ENCODE measurements at regions of chr3 and their contacts with region 1.

Region 1: DNA sequence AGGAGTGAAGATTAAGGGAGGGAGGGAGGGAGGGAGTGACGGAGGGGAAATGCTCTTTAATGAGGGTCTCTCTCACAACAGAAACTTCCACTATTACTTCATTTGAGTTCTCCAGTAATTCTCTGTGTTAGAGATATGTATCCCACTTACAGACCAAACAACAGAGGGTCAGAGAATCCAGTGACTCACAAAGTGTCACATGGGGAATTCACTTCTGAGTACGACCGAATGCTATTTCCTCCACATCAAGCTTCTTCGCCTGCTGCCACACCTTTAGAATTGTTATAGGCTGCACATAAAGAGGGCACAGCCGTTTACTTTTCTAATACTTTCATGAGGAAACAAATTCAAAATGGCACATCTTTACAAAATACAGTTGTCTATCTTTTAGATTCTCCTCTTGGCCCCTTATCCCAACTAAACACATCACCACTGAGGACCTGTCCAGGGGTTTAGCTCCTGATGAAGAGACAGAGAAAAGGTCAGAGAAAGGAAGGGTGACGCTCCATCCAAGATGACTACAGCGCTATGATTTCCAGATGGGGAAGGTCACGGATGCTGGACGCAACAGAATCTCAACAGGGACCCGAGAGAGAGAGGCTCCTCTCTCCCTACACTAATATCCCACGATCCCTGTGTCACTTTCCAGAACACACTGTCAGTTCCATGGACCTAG is 119.0 kb downstream of the XXYLT1 start:
- DNase-seq: no peak
- ATAC-seq: no peak

Region 2: DNA sequence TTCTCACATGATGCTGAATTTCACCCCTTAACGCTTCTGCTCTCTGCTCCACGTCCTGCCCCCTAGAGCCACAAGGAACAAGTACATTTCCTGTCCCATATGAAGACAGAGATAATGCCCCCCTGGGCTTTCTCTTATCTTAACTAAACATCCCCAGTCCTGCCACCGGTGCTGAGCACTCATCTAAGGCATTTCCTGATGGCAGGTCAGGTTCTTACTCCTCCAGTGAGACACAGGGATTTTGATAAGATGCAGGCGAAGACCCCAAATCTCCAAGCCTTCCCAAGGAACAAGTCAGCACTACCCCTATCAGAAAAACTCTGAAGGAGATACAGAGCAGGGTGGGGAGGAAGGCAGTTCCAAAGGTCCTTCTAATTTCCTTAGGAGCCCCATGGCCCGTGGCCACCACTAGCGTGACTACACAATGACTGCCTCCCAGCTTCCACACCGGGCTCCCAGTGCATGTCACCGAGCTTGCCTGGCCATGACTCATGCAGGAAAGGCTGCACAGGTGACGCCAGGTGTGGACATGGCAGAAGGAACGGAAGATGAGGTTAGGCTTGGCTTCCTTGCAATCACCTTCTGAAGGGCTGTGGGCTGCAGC is 33.9 kb before region 1 on chr3:
- intact Hi-C with region 1: loop called (anchors 2 kb)
- DNase-seq: no peak
- ATAC-seq: no peak

Region 3: DNA sequence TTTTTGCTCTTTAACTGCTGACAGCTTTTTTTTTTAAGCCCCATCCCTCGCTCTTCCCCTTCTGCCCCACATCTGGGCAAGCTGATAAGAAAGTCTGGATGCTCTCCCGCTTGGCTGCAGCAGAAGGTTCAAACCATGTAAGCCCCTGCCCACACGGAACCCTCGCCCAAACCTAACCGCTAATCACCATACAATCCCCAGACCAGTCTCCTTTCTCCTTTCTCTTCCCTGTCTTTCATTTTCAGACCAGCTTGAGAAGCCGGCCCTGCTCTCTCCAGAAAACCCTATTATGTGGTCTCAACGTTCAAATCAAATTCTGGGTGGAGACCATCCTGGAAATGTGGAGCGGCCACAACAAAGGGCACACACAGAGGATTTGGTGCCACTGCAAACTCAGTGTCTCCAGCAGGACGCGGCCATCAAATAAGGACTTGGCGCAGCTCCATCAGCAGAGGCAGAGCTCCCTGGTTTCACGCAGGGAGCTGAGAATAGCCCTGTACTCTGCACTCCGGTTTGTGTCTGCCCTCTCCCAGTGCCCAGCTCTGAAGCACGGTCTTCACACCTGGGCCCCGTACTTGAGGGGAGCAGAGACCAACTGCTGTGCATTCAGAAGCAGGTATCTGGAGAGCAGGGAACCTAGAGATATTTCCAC is 26.2 kb after region 1 on chr3:
- intact Hi-C with region 1: loop called (anchors 2 kb)
- DNase-seq: no peak
- ATAC-seq: peak; percentile 70

Region 4: DNA sequence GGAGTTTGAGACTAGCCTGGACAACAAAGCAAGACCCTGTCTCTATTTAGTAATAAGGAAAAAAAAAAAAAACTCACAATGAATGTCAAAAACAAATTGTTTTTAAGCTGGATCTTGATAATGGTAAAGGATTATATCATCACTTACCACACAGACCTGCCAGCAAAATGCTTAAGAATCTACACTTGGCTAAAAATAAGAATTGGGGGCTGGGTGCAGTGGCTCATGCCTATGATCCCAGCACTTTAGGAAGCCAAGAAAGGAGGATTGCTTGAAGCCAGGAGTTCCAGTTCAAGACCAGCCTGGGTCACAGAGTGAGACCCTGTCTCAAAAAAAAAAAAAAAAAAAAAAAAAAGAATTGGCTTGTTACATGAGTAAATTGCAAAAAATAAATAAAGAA is 259.8 kb after region 1 on chr3:
- intact Hi-C with region 1: no loop called
- DNase-seq: no peak
- ATAC-seq: no peak

Measured in Right ventricle myocardium inferior (tissue), 1 donor.